Calu3 (cell line): ENCODE measurements at regions of chr18 and their contacts with region 1.

Region 1: GRCh38 chr18:31942999-31943865 is at the start of gene TRAPPC8:
- DNase-seq: peak; percentile 98
- H3K4me3 Mint-ChIP-seq: peak within 1 kb of the TSS; percentile 99
- H3K27ac Mint-ChIP-seq: peak within 1 kb of the TSS; percentile 99
- H3K4me1 Mint-ChIP-seq: peaks cover 33% of the 10 kb centered on the region
- H3K27me3 Mint-ChIP-seq: no peaks in the 10 kb centered on the region
- CTCF ChIP-seq: no peak
- total RNA-seq, gene TRAPPC8: 38.0 and 40.1 TPM in 2 replicates

Region 2: GRCh38 chr18:31931886-31932240 is 11.4 kb before region 1 on chr18:
- CTCF ChIA-PET with region 1: interaction called, 8 read pairs
- intact Hi-C with region 1: loop called (anchors 1 kb)
- DNase-seq: peak; percentile 32
- H3K4me3 Mint-ChIP-seq: peak overlapping the region; percentile 37
- H3K27ac Mint-ChIP-seq: peak overlapping the region; percentile 56
- H3K4me1 Mint-ChIP-seq: peaks cover 26% of the 10 kb centered on the region
- H3K27me3 Mint-ChIP-seq: no peaks in the 10 kb centered on the region
- CTCF ChIP-seq: no peak

Region 3: DNA sequence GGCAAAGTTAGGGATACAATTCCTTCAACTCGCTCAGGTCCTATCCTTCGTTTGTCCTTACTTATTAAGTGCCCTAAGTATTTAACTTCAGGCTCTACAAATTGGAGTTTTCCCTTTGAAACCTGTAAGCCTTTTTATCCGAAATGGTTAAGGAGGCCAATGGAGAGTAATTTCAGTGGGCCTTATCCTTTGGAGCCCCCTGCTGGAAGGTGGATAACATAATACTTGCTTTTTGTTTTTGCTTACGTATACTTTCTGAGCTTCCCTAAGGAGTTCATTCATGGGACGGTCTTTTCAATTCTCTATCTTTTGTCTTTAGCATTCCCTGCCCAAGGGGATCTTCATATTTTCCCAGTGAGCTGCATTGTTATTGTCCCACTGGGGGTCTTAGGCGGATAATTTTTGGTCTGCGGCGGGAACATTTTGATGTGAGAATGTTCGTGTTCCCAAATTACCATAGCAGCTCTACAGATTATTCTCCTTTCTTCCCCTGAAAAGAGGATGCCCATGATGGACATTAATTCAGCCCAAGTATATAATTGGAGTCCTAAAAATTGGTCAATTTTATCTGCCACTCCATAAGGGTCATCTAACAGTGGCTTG is 34.1 kb after region 1 on chr18:
- CTCF ChIA-PET with region 1: interaction called, 10 read pairs
- intact Hi-C with region 1: no loop called
- DNase-seq: peak; percentile 43
- H3K4me3 Mint-ChIP-seq: no peak overlapping the region
- H3K27ac Mint-ChIP-seq: no peak overlapping the region
- H3K4me1 Mint-ChIP-seq: no peaks in the 10 kb centered on the region
- H3K27me3 Mint-ChIP-seq: no peaks in the 10 kb centered on the region
- CTCF ChIP-seq: peak; percentile 65

Region 4: DNA sequence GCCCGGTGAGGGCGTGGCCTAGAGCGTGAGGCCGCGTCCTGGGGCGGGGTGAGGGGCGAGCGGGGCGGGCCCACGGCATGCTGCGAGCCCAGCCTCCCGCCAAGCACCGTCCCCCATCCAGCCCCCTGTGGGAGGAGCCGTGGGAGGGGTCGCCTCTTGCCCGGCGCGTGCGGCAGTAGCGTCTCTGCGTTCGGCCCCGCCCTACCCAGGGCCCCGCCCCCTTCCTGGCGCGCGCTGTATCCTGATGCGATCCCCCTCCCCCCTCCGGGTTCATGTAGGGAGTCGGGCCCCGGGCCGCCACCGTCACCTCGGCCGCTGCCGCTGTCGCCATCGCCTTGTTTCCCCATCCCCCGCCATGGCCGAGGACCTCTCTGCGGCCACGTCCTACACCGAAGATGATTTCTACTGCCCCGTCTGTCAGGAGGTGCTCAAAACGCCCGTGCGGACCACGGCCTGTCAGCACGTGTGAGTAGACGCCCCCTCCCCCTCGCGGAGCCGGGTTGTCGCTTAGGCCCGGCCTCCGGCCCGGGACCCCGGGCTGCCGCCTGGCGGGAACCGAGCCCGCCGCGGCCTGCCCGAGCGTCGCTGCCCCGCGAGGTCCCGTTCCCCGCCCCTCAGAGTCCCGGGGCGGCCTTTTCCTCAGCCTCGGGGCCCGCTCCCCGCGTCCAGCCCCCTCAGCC is 149.3 kb after region 1 on chr18:
- CTCF ChIA-PET with region 1: no interaction called
- intact Hi-C with region 1: loop called (anchors 5 kb)
- DNase-seq: peak; percentile 100
- H3K4me3 Mint-ChIP-seq: peak overlapping the region; percentile 98
- H3K27ac Mint-ChIP-seq: peak overlapping the region; percentile 97
- H3K4me1 Mint-ChIP-seq: peaks cover 36% of the 10 kb centered on the region
- H3K27me3 Mint-ChIP-seq: no peaks in the 10 kb centered on the region
- CTCF ChIP-seq: no peak